ENCODE measurements at regions of chr17 and their contacts with region 1.

Region 1: DNA sequence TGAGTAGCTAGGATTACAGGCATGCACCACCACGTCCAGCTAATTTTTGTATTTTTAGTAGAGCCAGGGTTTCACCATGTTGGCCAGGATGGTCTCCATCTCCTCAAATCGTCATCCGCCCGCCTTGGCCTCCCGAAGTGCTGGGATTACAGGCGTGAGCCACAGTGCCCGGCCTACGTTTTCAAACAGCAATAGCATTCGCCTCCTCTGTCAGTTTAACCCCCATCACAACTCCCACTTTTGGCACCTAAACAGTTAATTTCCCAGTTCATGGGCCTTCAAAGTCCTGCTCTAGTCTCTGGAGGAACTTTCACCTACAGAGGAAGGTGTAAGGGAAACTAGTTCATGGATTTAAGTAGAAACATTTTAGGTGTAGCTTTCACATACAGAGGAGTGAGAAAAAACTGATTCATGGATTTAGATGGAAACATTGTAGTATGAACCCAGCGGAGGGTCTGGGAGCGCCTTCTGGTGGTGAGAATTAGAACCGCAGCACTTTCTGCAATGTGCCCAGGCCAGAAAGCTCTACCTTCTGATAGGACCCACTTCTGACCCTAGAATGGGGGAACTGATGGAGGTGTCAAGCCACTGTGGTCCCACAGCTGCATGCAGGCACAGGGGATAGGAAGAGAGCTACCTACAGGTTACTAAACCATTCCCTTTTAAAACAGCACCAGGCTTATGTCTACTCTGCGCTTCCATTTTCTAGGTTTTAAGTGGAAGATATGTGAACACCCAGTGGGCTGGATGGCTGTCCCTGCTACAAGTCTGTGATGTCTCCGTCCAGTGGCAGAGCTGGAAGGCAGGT is 12.0 kb upstream of the MEOX1 start:
- DNase-seq: peak; percentile 90
- ATAC-seq: peak; percentile 77

Region 2: GRCh38 chr17:43576563-43577229 is 97.0 kb before region 1 on chr17:
- intact Hi-C with region 1: loop called (anchors 2 kb)
- DNase-seq: peak; percentile 83
- ATAC-seq: peak; percentile 81

Region 3: GRCh38 chr17:43720311-43721060 is 46.8 kb after region 1 on chr17:
- intact Hi-C with region 1: no loop called
- DNase-seq: peak; percentile 89
- ATAC-seq: peak; percentile 96

Measured in sciatic nerve (tissue), 2 donors.